ENCODE measurements at regions of chr18 and their contacts with region 1.

Region 1: GRCh38 chr18:76803814-76804213 is 18.5 kb upstream of the ZNF236 start:
- DNase-seq: peak; percentile 82
- ATAC-seq: peak; percentile 80
- H3K4me3 Mint-ChIP-seq: no peak overlapping the region
- H3K27ac Mint-ChIP-seq: no peak overlapping the region
- H3K4me1 Mint-ChIP-seq: peaks cover 9% of the 10 kb centered on the region
- H3K27me3 Mint-ChIP-seq: peaks cover 14% of the 10 kb centered on the region
- CTCF ChIP-seq: peak; percentile 72

Region 2: GRCh38 chr18:76721207-76721996 is 82.4 kb before region 1 on chr18:
- CTCF ChIA-PET with region 1: interaction called, 16 read pairs
- POLR2A ChIA-PET with region 1: no interaction called
- intact Hi-C with region 1: no loop called
- DNase-seq: peak; percentile 86
- ATAC-seq: peak; percentile 97
- H3K4me3 Mint-ChIP-seq: peak overlapping the region; percentile 58
- H3K27ac Mint-ChIP-seq: peak overlapping the region; percentile 47
- H3K4me1 Mint-ChIP-seq: peaks cover 32% of the 10 kb centered on the region
- H3K27me3 Mint-ChIP-seq: peaks cover 24% of the 10 kb centered on the region
- CTCF ChIP-seq: no peak

Region 3: DNA sequence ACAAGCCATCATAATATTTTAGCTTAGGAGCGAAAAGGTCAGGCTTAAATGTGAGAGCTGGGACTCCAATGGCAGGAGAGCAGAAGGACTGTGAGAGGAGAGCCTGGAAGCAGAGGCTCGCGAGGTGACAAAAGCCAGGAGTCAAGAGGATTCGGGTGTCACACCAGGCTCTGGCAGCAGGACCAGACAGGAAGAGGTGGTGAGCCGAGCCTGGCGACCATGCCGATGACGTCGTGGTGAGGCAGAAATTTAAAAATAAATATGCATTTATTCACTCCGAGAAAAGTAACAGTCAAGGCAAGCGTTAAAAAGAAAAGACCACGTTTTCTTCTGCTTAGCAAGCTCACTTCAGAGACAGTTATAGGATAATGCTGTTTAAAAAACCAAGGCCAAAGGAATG is 12.7 kb before region 1 on chr18:
- CTCF ChIA-PET with region 1: interaction called, 19 read pairs
- POLR2A ChIA-PET with region 1: no interaction called
- intact Hi-C with region 1: no loop called
- DNase-seq: no peak
- ATAC-seq: no peak
- H3K4me3 Mint-ChIP-seq: no peak overlapping the region
- H3K27ac Mint-ChIP-seq: no peak overlapping the region
- H3K4me1 Mint-ChIP-seq: peaks cover 4% of the 10 kb centered on the region
- H3K27me3 Mint-ChIP-seq: peaks cover 4% of the 10 kb centered on the region
- CTCF ChIP-seq: no peak

Region 4: DNA sequence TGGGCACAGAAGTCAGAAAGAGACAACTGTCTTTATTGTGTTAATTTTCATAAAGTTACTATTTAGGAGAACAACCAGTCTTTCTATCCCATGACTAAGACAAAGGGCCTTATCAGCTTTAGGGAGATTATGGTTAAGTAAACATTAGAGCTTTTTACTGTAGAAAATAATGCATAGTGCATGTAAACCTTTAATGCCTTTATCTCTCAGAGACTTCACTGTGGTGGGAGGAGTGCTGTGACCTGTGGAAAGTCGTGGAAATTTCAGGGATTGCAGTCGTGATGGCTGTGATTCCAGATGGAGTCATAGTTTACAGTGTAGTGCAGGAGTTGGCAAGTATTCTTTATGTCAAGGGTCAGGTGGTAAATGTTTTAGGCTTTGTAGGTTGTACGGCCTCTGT is 34.4 kb after region 1 on chr18:
- CTCF ChIA-PET with region 1: interaction called, 17 read pairs
- POLR2A ChIA-PET with region 1: interaction called, 3 read pairs
- intact Hi-C with region 1: no loop called
- DNase-seq: no peak
- ATAC-seq: no peak
- H3K4me3 Mint-ChIP-seq: no peak overlapping the region
- H3K27ac Mint-ChIP-seq: no peak overlapping the region
- H3K4me1 Mint-ChIP-seq: peaks cover 33% of the 10 kb centered on the region
- H3K27me3 Mint-ChIP-seq: no peaks in the 10 kb centered on the region
- CTCF ChIP-seq: no peak

Region 5: DNA sequence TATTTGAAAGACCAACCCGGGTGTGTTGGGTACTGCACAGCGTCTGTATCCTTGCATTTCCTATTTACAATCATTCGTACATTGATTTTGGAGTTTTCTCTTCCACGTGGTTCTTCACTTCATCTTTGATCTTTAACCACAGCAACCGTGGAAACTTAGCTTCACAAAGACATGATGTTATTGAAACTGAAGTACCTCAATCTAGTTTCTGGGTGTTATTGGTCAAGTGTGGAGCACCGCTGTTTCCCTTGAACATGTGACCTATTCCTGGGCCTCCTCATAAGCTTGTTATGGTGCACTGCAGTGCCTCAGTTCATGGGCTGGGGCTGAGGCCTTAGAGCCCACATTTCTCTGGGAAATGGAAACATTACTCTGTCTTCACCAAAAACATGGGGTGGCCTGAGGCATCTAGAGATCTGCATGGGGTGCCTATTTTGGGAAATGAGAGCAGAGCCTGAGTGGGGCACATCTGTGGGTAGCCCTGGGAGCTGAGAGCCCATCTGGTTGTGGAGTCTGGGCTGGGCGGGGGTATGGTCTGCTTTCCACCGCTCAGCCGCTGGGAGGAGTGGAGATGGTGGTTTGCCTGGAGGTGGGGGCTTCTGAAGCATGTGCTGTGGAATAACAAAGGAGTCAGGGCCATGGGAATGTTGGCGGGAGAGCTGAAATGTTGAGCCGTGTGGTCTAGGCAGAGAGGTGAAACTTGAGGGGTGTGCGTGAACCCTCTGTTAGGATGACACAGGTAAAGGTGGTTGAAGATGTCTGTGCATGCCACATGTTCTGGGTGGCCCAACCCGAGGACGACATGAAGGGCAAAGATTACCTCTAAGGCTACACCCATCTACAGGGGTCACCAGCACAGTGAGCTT is 55.9 kb after region 1 on chr18:
- CTCF ChIA-PET with region 1: interaction called, 31 read pairs
- POLR2A ChIA-PET with region 1: no interaction called
- intact Hi-C with region 1: no loop called
- DNase-seq: peak; percentile 69
- ATAC-seq: peak; percentile 97
- H3K4me3 Mint-ChIP-seq: no peak overlapping the region
- H3K27ac Mint-ChIP-seq: peak overlapping the region; percentile 81
- H3K4me1 Mint-ChIP-seq: peaks cover 30% of the 10 kb centered on the region
- H3K27me3 Mint-ChIP-seq: no peaks in the 10 kb centered on the region
- CTCF ChIP-seq: no peak

Region 6: DNA sequence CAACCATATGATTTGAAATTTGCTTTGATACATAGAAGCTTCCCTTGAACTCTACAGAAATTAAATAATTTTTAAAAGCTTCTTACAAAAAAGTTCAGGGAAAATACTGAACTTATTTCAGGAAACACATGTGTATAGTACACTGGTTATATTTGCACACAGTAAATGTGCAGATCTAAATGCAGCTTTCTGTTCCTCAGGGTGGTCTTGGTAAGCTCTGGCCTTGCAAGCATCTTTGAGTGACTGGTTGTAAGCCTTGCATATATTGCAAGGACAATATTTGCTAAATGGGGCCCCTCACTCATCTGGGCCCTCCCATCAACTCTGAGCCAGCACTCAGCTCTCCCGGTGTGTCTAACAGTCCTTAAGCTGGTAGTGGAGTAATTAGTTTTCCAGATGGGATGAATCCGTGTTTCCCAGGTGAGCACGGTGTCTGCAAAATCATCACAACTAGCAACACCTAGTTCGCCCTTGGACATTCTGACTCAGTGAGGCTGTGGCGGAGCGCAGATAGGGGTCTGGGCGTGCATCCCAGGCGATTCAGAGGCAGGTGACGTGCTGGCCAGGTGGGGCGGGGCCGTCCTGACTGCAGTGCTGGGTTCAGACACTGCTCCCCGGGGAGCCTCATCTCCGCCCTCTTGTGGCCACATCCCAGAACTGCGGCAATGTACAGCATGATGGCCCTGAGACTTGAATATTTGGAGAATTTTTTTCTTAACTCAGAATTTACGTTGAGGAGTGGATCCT is 179.2 kb after region 1 on chr18:
- CTCF ChIA-PET with region 1: interaction called, 88 read pairs
- POLR2A ChIA-PET with region 1: no interaction called
- intact Hi-C with region 1: loop called (anchors 2 kb)
- DNase-seq: peak; percentile 95
- ATAC-seq: peak; percentile 100
- H3K4me3 Mint-ChIP-seq: no peak overlapping the region
- H3K27ac Mint-ChIP-seq: no peak overlapping the region
- H3K4me1 Mint-ChIP-seq: peaks cover 6% of the 10 kb centered on the region
- H3K27me3 Mint-ChIP-seq: no peaks in the 10 kb centered on the region
- CTCF ChIP-seq: peak; percentile 87